ENCODE measurements at regions of chr12 and their contacts with region 1.

Region 1: DNA sequence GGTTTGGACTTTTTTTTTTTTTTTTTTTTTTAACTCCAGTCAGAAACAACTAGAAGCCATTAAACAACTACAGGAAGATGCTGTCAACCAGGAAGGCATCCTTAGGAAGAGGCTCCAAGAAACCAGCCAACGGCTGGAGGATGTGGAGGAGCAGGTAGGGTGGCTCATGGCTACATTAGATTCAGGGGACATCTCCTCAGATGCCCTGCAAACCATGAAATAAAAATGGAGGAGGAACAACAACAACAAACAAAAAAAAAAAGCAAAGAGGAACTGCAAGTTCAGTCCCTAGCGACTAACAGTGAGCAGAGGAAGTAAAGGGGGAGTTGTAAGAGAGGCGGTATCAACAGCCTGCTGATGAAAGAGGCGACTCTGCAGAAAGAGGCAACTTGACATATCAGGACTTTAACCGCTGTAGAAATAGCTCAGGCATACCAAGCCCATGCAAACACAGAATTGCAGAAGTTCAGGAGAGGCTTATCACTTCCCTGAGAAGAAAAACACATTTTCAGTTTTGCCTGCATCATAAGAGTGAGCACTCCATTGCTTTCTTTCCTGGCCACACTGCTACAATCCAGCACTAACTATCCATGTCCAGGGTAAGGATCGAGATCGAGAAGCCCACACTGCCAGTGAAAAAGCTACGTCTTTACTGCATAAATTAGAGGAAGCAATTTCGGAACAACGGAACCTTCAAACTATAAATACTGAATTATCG is 103.5 kb upstream of the BCAT1 start:
- DNase-seq: peak; percentile 20 to 90 (median 51)
- ATAC-seq: peak; percentile 70
- H3K4me3 ChIP-seq: peak overlapping the region; percentile 67 to 76
- H3K4me3 Mint-ChIP-seq: peak overlapping the region; percentile 97
- H3K27ac ChIP-seq: peak overlapping the region; percentile 79 to 92
- H3K27ac Mint-ChIP-seq: peak overlapping the region; percentile 98
- H3K4me1 ChIP-seq: peaks cover 38% of the 10 kb centered on the region
- H3K4me1 Mint-ChIP-seq: peaks cover 41% of the 10 kb centered on the region
- H3K27me3 ChIP-seq: no peaks in the 10 kb centered on the region
- H3K27me3 Mint-ChIP-seq: no peaks in the 10 kb centered on the region
- CTCF ChIP-seq: no peak

Region 2: GRCh38 chr12:24991209-24992049 is 60.9 kb before region 1 on chr12:
- CTCF ChIA-PET with region 1: interaction called, 3 read pairs
- POLR2A ChIA-PET with region 1: interaction called, 3 read pairs
- intact Hi-C with region 1: loop called (anchors 5 kb)
- DNase-seq: peak in 3 of 9 experiments; percentile 15 to 82 (median 76)
- ATAC-seq: peak; percentile 91
- H3K4me3 ChIP-seq: no peak overlapping the region
- H3K4me3 Mint-ChIP-seq: no peak overlapping the region
- H3K27ac ChIP-seq: no peak overlapping the region
- H3K27ac Mint-ChIP-seq: no peak overlapping the region
- H3K4me1 ChIP-seq: no peaks in the 10 kb centered on the region
- H3K4me1 Mint-ChIP-seq: no peaks in the 10 kb centered on the region
- H3K27me3 ChIP-seq: no peaks in the 10 kb centered on the region
- H3K27me3 Mint-ChIP-seq: no peaks in the 10 kb centered on the region
- CTCF ChIP-seq: peak; percentile 84

Region 3: GRCh38 chr12:25005376-25005775 is 47.0 kb before region 1 on chr12:
- CTCF ChIA-PET with region 1: no interaction called
- POLR2A ChIA-PET with region 1: no interaction called
- intact Hi-C with region 1: loop called in 1 of 2 experiments (anchors 5 kb)
- DNase-seq: no peak
- ATAC-seq: no peak
- H3K4me3 ChIP-seq: no peak overlapping the region
- H3K4me3 Mint-ChIP-seq: no peak overlapping the region
- H3K27ac ChIP-seq: no peak overlapping the region
- H3K27ac Mint-ChIP-seq: no peak overlapping the region
- H3K4me1 ChIP-seq: no peaks in the 10 kb centered on the region
- H3K4me1 Mint-ChIP-seq: no peaks in the 10 kb centered on the region
- H3K27me3 ChIP-seq: no peaks in the 10 kb centered on the region
- H3K27me3 Mint-ChIP-seq: no peaks in the 10 kb centered on the region
- CTCF ChIP-seq: no peak

Region 4: GRCh38 chr12:25074954-25075353 is 22.6 kb after region 1 on chr12:
- CTCF ChIA-PET with region 1: no interaction called
- POLR2A ChIA-PET with region 1: interaction called, 5 read pairs
- intact Hi-C with region 1: loop called in 1 of 2 experiments (anchors 2 kb)
- DNase-seq: no peak
- ATAC-seq: no peak
- H3K4me3 ChIP-seq: no peak overlapping the region
- H3K4me3 Mint-ChIP-seq: no peak overlapping the region
- H3K27ac ChIP-seq: no peak overlapping the region
- H3K27ac Mint-ChIP-seq: peak overlapping the region; percentile 3
- H3K4me1 ChIP-seq: no peaks in the 10 kb centered on the region
- H3K4me1 Mint-ChIP-seq: peaks cover 24% of the 10 kb centered on the region
- H3K27me3 ChIP-seq: no peaks in the 10 kb centered on the region
- H3K27me3 Mint-ChIP-seq: no peaks in the 10 kb centered on the region
- CTCF ChIP-seq: no peak

Region 5: DNA sequence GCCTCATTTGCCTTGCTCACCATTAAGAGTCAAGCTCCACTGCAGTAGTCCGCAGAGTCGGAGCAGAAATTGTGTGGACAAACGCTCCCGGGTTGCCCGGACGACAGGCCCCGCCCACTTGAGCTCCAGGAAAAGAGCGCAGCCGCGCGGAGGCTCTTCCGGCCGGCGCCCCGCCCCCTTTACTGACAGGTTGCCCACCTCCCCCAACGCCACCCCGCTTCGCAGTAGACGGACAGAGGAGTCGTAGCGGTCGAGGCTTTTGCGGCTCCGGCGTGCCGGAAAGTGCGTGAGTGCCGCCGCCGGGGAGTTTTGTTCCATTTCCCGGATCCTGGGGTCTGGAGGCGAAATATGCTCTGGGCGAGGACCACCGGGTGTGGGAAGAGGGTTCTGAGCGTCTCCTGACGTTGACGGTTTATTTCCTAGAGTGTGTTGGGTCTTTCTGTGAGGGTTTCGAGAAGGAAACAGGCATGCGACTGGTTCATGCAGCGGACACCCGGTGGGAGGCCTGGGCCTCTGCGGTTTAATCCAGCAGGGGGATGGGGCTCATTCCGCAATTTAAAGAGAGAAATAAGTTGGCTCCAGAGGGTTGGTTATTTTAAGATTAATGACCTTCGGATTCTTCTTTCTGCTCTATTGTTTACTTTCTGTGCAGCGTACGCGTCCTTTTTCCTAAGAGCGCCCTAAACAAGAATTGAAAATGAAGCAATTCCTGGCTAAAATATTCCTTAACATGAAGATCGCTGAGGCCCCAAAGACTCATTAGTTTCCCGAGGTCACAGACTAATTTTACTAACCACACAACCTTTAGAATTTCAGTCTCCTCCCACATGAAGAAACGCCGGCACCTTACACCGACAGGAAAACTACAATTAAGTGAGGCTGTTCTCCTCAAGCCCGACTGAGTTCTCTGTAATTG is 143.0 kb after region 1 on chr12 and contains the starts of genes DNAI7 and ETFRF1:
- CTCF ChIA-PET with region 1: interaction called, 3 read pairs
- POLR2A ChIA-PET with region 1: interaction called, 6 read pairs
- intact Hi-C with region 1: loop called (anchors 1 to 5 kb)
- DNase-seq: peak; percentile 92 to 99 (median 96)
- ATAC-seq: peak; percentile 97
- H3K4me3 ChIP-seq: peak within 1 kb of the TSS; percentile 77
- H3K4me3 Mint-ChIP-seq: peak within 1 kb of the TSS; percentile 97
- H3K27ac ChIP-seq: peak within 1 kb of the TSS; percentile 93 to 97
- H3K27ac Mint-ChIP-seq: peak within 1 kb of the TSS; percentile 99
- H3K4me1 ChIP-seq: peaks cover 18% of the 10 kb centered on the region
- H3K4me1 Mint-ChIP-seq: peaks cover 40% of the 10 kb centered on the region
- H3K27me3 ChIP-seq: no peaks in the 10 kb centered on the region
- H3K27me3 Mint-ChIP-seq: no peaks in the 10 kb centered on the region
- CTCF ChIP-seq: no peak
- total RNA-seq, gene DNAI7: 0.16 to 0.53 TPM
- total RNA-seq, gene ETFRF1: 29.2 to 30.1 TPM

Region 6: DNA sequence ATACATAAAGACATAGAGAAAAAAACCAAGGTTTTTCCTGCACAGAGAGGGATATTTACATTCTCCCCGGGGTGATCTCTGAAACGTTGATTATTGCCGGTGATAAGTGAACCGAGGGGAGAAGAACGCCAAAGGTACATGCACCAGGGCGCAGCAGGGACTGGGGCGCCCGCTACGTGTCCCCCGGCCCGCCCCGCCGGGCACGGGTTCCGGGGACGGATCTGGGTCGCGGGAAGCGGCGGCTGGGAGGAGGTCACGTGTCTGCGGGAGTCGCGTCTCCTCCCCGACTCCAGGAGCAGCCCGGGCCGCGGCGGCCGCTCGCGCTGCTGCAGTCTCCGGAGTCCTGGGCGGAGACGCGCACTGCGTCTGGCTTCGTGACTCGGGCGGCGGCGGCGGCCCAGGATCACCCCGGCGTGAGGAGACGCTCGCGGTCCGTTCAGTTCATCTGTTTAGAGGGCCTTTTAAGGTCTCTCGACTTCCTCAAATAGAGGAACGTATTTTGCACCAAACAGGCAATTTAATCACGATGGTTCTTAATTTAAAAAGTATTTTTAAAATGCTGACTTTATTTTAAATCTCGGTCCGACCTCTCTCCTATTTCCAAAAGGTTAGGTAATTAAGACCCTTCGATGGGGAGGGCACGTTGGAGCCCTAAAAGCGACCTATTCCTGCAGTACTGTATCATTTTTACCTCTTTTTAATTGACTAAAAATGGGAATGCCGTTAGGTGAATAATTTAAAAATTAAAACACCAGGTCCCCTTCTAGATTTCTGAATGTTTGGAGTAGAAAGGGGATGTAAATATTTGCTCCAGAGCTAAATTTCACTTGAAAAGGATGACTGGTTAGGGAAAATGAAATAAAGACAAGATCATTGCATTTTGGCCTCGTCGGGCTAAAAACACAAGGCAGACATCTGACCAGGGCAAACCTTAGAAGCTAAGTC is 1074.3 kb after region 1 on chr12:
- CTCF ChIA-PET with region 1: no interaction called
- POLR2A ChIA-PET with region 1: no interaction called
- intact Hi-C with region 1: loop called in 1 of 2 experiments (anchors 10 kb)
- DNase-seq: peak in 2 of 9 experiments; percentile 33 to 35
- ATAC-seq: no peak
- H3K4me3 ChIP-seq: peak overlapping the region in 1 of 2 experiments; percentile 39
- H3K4me3 Mint-ChIP-seq: peak overlapping the region; percentile 78
- H3K27ac ChIP-seq: no peak overlapping the region
- H3K27ac Mint-ChIP-seq: no peak overlapping the region
- H3K4me1 ChIP-seq: peaks cover 29% of the 10 kb centered on the region
- H3K4me1 Mint-ChIP-seq: peaks cover 40% of the 10 kb centered on the region
- H3K27me3 ChIP-seq: peaks cover 24 to 52% of the 10 kb centered on the region in 2 experiments
- H3K27me3 Mint-ChIP-seq: peaks cover 66% of the 10 kb centered on the region
- CTCF ChIP-seq: no peak

Region 7: GRCh38 chr12:27024291-27024690 is 1971.9 kb after region 1 on chr12:
- CTCF ChIA-PET with region 1: no interaction called
- POLR2A ChIA-PET with region 1: no interaction called
- intact Hi-C with region 1: loop called (anchors 5 to 10 kb)
- DNase-seq: no peak
- ATAC-seq: no peak
- H3K4me3 ChIP-seq: no peak overlapping the region
- H3K4me3 Mint-ChIP-seq: peak overlapping the region; percentile 26
- H3K27ac ChIP-seq: no peak overlapping the region
- H3K27ac Mint-ChIP-seq: no peak overlapping the region
- H3K4me1 ChIP-seq: peaks cover 21% of the 10 kb centered on the region
- H3K4me1 Mint-ChIP-seq: peaks cover 47% of the 10 kb centered on the region
- H3K27me3 ChIP-seq: no peaks in the 10 kb centered on the region
- H3K27me3 Mint-ChIP-seq: no peaks in the 10 kb centered on the region
- CTCF ChIP-seq: no peak

Measured in CD8-positive, alpha-beta T cell (primary cell).